ENCODE measurements at regions of chr20 and their contacts with region 1.

Region 1: GRCh38 chr20:23050847-23051631 is 1.6 kb upstream of the THBD start:
- DNase-seq: peak; percentile 89
- ATAC-seq: peak; percentile 43 to 56

Region 2: GRCh38 chr20:22691369-22692118 is 359.5 kb before region 1 on chr20:
- intact Hi-C with region 1: loop called in 1 of 2 experiments (anchors 10 kb)
- DNase-seq: peak; percentile 82
- ATAC-seq: peak; percentile 92 to 93

Region 3: GRCh38 chr20:22861229-22861980 is 189.6 kb before region 1 on chr20:
- intact Hi-C with region 1: loop called in 1 of 2 experiments (anchors 10 kb)
- DNase-seq: no peak
- ATAC-seq: no peak

Region 4: GRCh38 chr20:22999752-23000151 is 51.3 kb before region 1 on chr20:
- intact Hi-C with region 1: no loop called
- DNase-seq: no peak
- ATAC-seq: no peak

Region 5: GRCh38 chr20:23235173-23236027 is 184.4 kb after region 1 on chr20:
- intact Hi-C with region 1: loop called in 1 of 2 experiments (anchors 5 kb)
- DNase-seq: peak; percentile 81
- ATAC-seq: peak; percentile 91 to 94

Region 6: GRCh38 chr20:23349338-23350195 is 298.5 kb after region 1 on chr20:
- intact Hi-C with region 1: loop called in 1 of 2 experiments (anchors 10 kb)
- DNase-seq: peak; percentile 84
- ATAC-seq: peak; percentile 79 to 85